ENCODE measurements at regions of chr1 and their contacts with region 1.

Region 1: GRCh38 chr1:228212966-228213844 is 5.4 kb downstream of the OBSCN start:
- DNase-seq: peak; percentile 9
- ATAC-seq: peak; percentile 99
- H3K4me3 ChIP-seq: peak overlapping the region; percentile 47; the same call in 1 of the 2 replicates
- H3K27ac ChIP-seq: no peak overlapping the region
- H3K4me1 ChIP-seq: no peaks in the 10 kb centered on the region
- H3K27me3 ChIP-seq: no peaks in the 10 kb centered on the region
- CTCF ChIP-seq: peak; percentile 45 to 77 (median 68)
- EP300 ChIP-seq: no peak
- POLR2A ChIP-seq: no peak
- RAD21 ChIP-seq: peak; percentile 50

Region 2: DNA sequence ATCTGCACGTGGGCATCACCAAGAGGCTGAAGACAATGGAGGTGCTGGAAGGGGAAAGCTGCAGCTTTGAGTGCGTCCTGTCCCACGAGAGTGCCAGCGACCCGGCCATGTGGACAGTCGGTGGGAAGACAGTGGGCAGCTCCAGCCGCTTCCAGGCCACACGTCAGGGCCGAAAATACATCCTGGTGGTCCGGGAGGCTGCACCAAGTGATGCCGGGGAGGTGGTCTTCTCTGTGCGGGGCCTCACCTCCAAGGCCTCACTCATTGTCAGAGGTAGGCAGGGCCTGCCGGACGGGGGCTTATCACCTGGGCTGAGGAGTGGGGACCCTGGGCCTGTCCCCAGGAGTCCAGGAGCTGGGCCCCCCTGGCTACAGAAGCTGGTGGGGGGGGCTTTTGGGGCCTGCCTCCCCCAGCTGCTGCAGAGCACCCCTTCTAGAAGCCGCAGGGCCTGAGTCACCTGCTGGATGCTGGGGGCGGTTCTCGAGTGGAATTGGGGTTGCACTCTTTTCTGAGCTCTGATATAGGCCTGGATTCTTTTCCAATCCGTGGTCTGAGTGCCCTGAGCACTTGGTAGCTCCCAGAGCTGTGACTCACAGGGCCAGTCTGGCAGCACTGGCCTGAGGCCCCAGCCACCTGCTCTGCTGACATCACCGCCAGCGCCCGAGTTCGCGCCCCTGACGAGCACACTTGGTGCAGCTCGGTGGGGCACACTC is 68.9 kb after region 1 on chr1:
- CTCF ChIA-PET with region 1: no interaction called
- POLR2A ChIA-PET with region 1: no interaction called
- RAD21 ChIA-PET with region 1: no interaction called
- SMC1A ChIA-PET with region 1: no interaction called
- in situ Hi-C with region 1: no loop called
- intact Hi-C with region 1: loop called (anchors 10 kb)
- DNase-seq: no peak
- ATAC-seq: no peak
- H3K4me3 ChIP-seq: no peak overlapping the region
- H3K27ac ChIP-seq: no peak overlapping the region
- H3K4me1 ChIP-seq: no peaks in the 10 kb centered on the region
- H3K27me3 ChIP-seq: no peaks in the 10 kb centered on the region
- CTCF ChIP-seq: no peak
- EP300 ChIP-seq: no peak
- POLR2A ChIP-seq: no peak
- RAD21 ChIP-seq: no peak

Region 3: DNA sequence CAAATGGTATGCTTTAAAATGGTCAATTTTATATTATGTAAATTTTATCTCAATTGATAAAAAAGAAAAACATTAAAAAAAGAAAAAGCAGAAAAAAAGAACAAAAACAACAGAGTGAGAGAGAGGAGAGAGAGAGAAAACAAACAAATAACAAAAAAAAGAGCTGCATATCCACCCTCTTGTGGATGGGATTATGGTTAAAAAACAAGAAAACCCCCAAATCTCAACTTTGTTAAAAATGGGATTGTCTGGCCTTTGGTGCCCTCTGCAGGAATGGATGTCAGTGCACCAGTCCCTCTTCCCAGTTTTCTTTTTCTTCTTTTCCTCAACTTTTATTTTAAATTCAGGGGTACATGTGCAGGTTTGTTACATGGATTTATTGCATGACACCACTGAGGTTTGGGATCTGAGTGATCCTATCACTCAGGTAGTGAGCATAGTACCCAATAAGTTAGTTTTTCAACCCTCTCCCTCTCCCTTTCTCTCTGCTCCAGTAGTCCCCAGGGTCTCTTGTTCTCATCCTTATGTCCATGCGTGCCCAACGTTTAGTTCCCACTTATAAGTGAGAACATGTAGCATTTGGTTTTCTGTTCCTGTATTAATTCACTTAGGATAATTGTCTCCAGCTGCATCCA is 302.1 kb after region 1 on chr1:
- CTCF ChIA-PET with region 1: no interaction called
- POLR2A ChIA-PET with region 1: no interaction called
- RAD21 ChIA-PET with region 1: no interaction called
- SMC1A ChIA-PET with region 1: no interaction called
- in situ Hi-C with region 1: no loop called
- intact Hi-C with region 1: loop called (anchors 5 kb)
- DNase-seq: no peak
- ATAC-seq: peak; percentile 51; the same call in 2 of the 3 replicates
- H3K4me3 ChIP-seq: no peak overlapping the region
- H3K27ac ChIP-seq: no peak overlapping the region
- H3K4me1 ChIP-seq: no peaks in the 10 kb centered on the region
- H3K27me3 ChIP-seq: no peaks in the 10 kb centered on the region; a peak in 3 of 4 replicates
- CTCF ChIP-seq: peak; percentile 50 to 69 (median 55); a peak in 4 of 6 replicates
- EP300 ChIP-seq: no peak
- POLR2A ChIP-seq: no peak
- RAD21 ChIP-seq: peak; percentile 77